ENCODE measurements at regions of chr11 and their contacts with region 1.

Region 1: GRCh38 chr11:68206187-68206601 is 6.9 kb downstream of the KMT5B start:
- DNase-seq: peak; percentile 75
- ATAC-seq: peak; percentile 70
- H3K4me3 ChIP-seq: no peak overlapping the region
- H3K4me3 Mint-ChIP-seq: no peak overlapping the region
- H3K27ac ChIP-seq: no peak overlapping the region
- H3K27ac Mint-ChIP-seq: no peak overlapping the region
- H3K4me1 ChIP-seq: peaks cover 33 to 43% of the 10 kb centered on the region in 2 donors
- H3K4me1 Mint-ChIP-seq: peaks cover 63% of the 10 kb centered on the region
- H3K27me3 ChIP-seq: no peaks in the 10 kb centered on the region
- H3K27me3 Mint-ChIP-seq: no peaks in the 10 kb centered on the region
- CTCF ChIP-seq: peak; percentile 86

Region 2: GRCh38 chr11:68010090-68011041 is 195.8 kb before region 1 on chr11 and contains the start of gene ALDH3B1:
- CTCF ChIA-PET with region 1: interaction called, 72 read pairs
- POLR2A ChIA-PET with region 1: interaction called, 3 read pairs
- intact Hi-C with region 1: loop called (anchors 1 kb)
- DNase-seq: peak; percentile 51
- ATAC-seq: peak; percentile 76
- H3K4me3 ChIP-seq: peak within 1 kb of the TSS in 4 of 5 experiments; percentile 0 to 41 (median 24)
- H3K4me3 Mint-ChIP-seq: peak within 1 kb of the TSS; percentile 76
- H3K27ac ChIP-seq: peak within 1 kb of the TSS; percentile 25 to 53
- H3K27ac Mint-ChIP-seq: peak within 1 kb of the TSS; percentile 86
- H3K4me1 ChIP-seq: peaks cover 45 to 59% of the 10 kb centered on the region in 2 donors
- H3K4me1 Mint-ChIP-seq: peaks cover 44% of the 10 kb centered on the region
- H3K27me3 ChIP-seq: no peaks in the 10 kb centered on the region
- H3K27me3 Mint-ChIP-seq: no peaks in the 10 kb centered on the region
- CTCF ChIP-seq: no peak
- total RNA-seq, gene ALDH3B1: 0.39 and 0.81 TPM in 2 replicates

Region 3: GRCh38 chr11:68047437-68048290 is 158.5 kb before region 1 on chr11:
- CTCF ChIA-PET with region 1: no interaction called
- POLR2A ChIA-PET with region 1: no interaction called
- intact Hi-C with region 1: no loop called
- DNase-seq: peak; percentile 9
- ATAC-seq: no peak
- H3K4me3 ChIP-seq: no peak overlapping the region
- H3K4me3 Mint-ChIP-seq: no peak overlapping the region
- H3K27ac ChIP-seq: no peak overlapping the region
- H3K27ac Mint-ChIP-seq: peak overlapping the region; percentile 41
- H3K4me1 ChIP-seq: no peaks in the 10 kb centered on the region
- H3K4me1 Mint-ChIP-seq: no peaks in the 10 kb centered on the region
- H3K27me3 ChIP-seq: no peaks in the 10 kb centered on the region
- H3K27me3 Mint-ChIP-seq: no peaks in the 10 kb centered on the region
- CTCF ChIP-seq: no peak

Region 4: GRCh38 chr11:68191661-68192579 is 14.3 kb before region 1 on chr11:
- CTCF ChIA-PET with region 1: interaction called, 26 read pairs
- POLR2A ChIA-PET with region 1: no interaction called
- intact Hi-C with region 1: no loop called
- DNase-seq: no peak
- ATAC-seq: no peak
- H3K4me3 ChIP-seq: no peak overlapping the region
- H3K4me3 Mint-ChIP-seq: no peak overlapping the region
- H3K27ac ChIP-seq: no peak overlapping the region
- H3K27ac Mint-ChIP-seq: no peak overlapping the region
- H3K4me1 ChIP-seq: peaks cover 15 to 38% of the 10 kb centered on the region in 2 donors
- H3K4me1 Mint-ChIP-seq: peaks cover 52% of the 10 kb centered on the region
- H3K27me3 ChIP-seq: no peaks in the 10 kb centered on the region
- H3K27me3 Mint-ChIP-seq: no peaks in the 10 kb centered on the region
- CTCF ChIP-seq: no peak

Region 5: GRCh38 chr11:68584097-68584496 is 377.9 kb after region 1 on chr11:
- CTCF ChIA-PET with region 1: no interaction called
- POLR2A ChIA-PET with region 1: no interaction called
- intact Hi-C with region 1: no loop called
- DNase-seq: peak; percentile 70
- ATAC-seq: no peak
- H3K4me3 ChIP-seq: no peak overlapping the region
- H3K4me3 Mint-ChIP-seq: no peak overlapping the region
- H3K27ac ChIP-seq: no peak overlapping the region
- H3K27ac Mint-ChIP-seq: peak overlapping the region; percentile 50
- H3K4me1 ChIP-seq: no peaks in the 10 kb centered on the region
- H3K4me1 Mint-ChIP-seq: peaks cover 13% of the 10 kb centered on the region
- H3K27me3 ChIP-seq: no peaks in the 10 kb centered on the region
- H3K27me3 Mint-ChIP-seq: no peaks in the 10 kb centered on the region
- CTCF ChIP-seq: peak; percentile 75

Measured in B cell (primary cell).